K562 (cell line): ENCODE measurements at regions of chr1 and their contacts with region 1.

Region 1: DNA sequence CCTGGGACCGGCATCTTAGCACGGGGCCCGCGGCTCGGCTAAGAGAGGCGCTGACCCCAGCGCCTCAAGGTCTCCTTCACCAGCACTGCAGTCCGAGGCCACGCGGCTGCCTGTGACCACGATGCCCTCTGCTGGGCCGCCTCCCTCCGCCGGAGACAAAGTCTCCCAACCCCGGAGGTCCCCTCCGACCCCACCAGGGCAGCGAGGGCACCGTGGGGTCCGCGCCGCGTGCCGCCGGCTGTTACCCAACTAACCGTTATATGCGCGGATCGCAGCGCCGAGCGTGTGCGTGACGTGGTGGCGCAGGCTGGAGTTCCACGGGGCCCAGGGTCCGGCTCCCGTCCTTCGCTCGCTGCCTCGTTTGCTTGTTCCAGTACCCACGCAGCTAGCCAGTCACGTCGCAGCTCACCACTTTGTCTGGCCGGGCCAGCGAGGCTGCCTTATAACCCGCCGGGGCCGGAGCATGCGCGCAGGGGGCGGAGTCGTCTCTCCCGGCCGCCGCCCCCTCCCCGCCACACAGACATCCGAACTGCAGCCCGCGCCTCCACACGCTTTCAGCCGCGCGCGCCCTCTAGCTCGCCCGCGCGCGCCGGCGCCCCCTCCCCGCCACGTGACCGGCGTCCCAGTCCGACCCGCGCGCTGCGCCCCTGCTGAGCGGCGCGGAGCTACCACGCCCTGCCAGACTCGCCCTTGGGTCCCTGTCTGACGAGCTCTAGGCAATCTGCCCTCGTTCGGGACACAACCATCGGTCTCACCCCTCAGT is at the start of gene SLC16A1:
- DNase-seq: peak; percentile 97 to 98 (median 98)
- ATAC-seq: peak; percentile 84
- H3K4me3 ChIP-seq: peak within 1 kb of the TSS; percentile 74
- H3K27ac ChIP-seq: peak within 1 kb of the TSS; percentile 96
- H3K4me1 ChIP-seq: peaks cover 20 to 31% of the 10 kb centered on the region in 2 experiments
- H3K27me3 ChIP-seq: no peaks in the 10 kb centered on the region
- CTCF ChIP-seq: peak; percentile 42 to 59 (median 55); a peak in 5 of 6 replicates
- EP300 ChIP-seq: peak; percentile 53
- POLR2A ChIP-seq: peak; percentile 99
- RAD21 ChIP-seq: peak; percentile 71 to 77
- polyA plus RNA-seq, gene SLC16A1: 79.0 to 82.5 TPM

Region 2: GRCh38 chr1:112809253-112809684 is 146.7 kb before region 1 on chr1:
- CTCF ChIA-PET with region 1: no interaction called
- POLR2A ChIA-PET with region 1: interaction called, 3 read pairs
- in situ Hi-C with region 1: no loop called
- intact Hi-C with region 1: loop called (anchors 1 kb)
- DNase-seq: peak; percentile 78 to 88 (median 82)
- ATAC-seq: peak; percentile 97
- H3K4me3 ChIP-seq: no peak overlapping the region
- H3K27ac ChIP-seq: no peak overlapping the region
- H3K4me1 ChIP-seq: peaks cover 2 to 6% of the 10 kb centered on the region in 2 experiments; a peak in 3 of 5 replicates
- H3K27me3 ChIP-seq: peaks cover 19 to 20% of the 10 kb centered on the region in 2 experiments; a peak in 4 of 5 replicates
- CTCF ChIP-seq: peak; percentile 89 to 98 (median 95)
- EP300 ChIP-seq: no peak
- POLR2A ChIP-seq: no peak
- RAD21 ChIP-seq: peak; percentile 94 to 98

Region 3: DNA sequence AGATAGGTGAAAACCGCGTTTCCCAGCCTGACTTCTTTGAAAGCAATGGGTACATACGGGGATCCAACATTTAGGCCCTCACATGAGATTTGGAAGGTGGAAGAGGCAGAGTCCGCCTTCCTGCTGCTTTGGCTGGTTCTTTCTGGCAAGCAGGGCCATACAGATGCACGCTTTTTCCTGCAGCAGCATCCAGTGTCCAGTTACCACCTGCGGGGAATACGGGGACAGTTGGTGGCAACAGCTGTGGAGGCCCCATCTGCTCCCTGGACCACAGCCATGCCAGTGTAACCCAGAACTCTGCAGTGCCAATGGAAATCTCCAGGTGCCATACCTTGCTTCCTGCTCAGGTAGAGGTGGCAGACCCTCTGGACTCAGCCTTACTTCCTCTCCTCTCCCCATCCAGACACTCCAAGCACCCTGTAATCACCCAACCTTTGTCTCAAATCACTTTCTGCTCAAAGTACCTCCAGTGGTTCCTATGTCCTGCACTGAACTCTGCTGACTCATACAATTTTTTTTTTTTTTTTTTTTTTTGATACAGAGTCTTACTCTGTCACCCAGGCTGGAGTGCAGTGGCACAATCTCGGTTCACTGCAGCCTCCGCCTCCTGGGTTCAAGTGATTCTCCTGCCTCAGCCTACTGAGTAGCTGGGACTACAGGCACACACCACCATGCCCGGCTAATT is 68.2 kb before region 1 on chr1:
- CTCF ChIA-PET with region 1: interaction called, 3 read pairs
- POLR2A ChIA-PET with region 1: interaction called, 20 read pairs
- in situ Hi-C with region 1: no loop called
- intact Hi-C with region 1: no loop called
- DNase-seq: no peak
- ATAC-seq: peak; percentile 63
- H3K4me3 ChIP-seq: no peak overlapping the region
- H3K27ac ChIP-seq: no peak overlapping the region
- H3K4me1 ChIP-seq: peaks cover 26 to 27% of the 10 kb centered on the region in 2 experiments
- H3K27me3 ChIP-seq: no peaks in the 10 kb centered on the region
- CTCF ChIP-seq: no peak
- EP300 ChIP-seq: no peak
- POLR2A ChIP-seq: no peak
- RAD21 ChIP-seq: no peak

Region 4: GRCh38 chr1:112935461-112936289 is 20.3 kb before region 1 on chr1:
- CTCF ChIA-PET with region 1: no interaction called
- POLR2A ChIA-PET with region 1: interaction called, 190 read pairs
- in situ Hi-C with region 1: no loop called
- intact Hi-C with region 1: loop called (anchors 2 kb)
- DNase-seq: peak in 2 of 4 experiments; percentile 48 to 54
- ATAC-seq: peak; percentile 78
- H3K4me3 ChIP-seq: no peak overlapping the region
- H3K27ac ChIP-seq: peak overlapping the region; percentile 65
- H3K4me1 ChIP-seq: peaks cover 14 to 43% of the 10 kb centered on the region in 2 experiments
- H3K27me3 ChIP-seq: no peaks in the 10 kb centered on the region
- CTCF ChIP-seq: no peak
- EP300 ChIP-seq: peak; percentile 93
- POLR2A ChIP-seq: no peak
- RAD21 ChIP-seq: 0 out of 4 replicates have a peak, but pooled peaks of 1 of the 2 experiments have one; percentile 14

Region 5: GRCh38 chr1:113042285-113043143 is 86.6 kb after region 1 on chr1:
- CTCF ChIA-PET with region 1: no interaction called
- POLR2A ChIA-PET with region 1: interaction called, 6 read pairs
- in situ Hi-C with region 1: loop called (anchors 5 kb)
- intact Hi-C with region 1: loop called (anchors 1 kb)
- DNase-seq: peak; percentile 85 to 96 (median 90)
- ATAC-seq: peak; percentile 97
- H3K4me3 ChIP-seq: no peak overlapping the region
- H3K27ac ChIP-seq: peak overlapping the region; percentile 72
- H3K4me1 ChIP-seq: peaks cover 18 to 49% of the 10 kb centered on the region in 2 experiments
- H3K27me3 ChIP-seq: no peaks in the 10 kb centered on the region
- CTCF ChIP-seq: peak; percentile 90 to 98 (median 93)
- EP300 ChIP-seq: peak; percentile 73
- POLR2A ChIP-seq: no peak
- RAD21 ChIP-seq: peak; percentile 98

Region 6: DNA sequence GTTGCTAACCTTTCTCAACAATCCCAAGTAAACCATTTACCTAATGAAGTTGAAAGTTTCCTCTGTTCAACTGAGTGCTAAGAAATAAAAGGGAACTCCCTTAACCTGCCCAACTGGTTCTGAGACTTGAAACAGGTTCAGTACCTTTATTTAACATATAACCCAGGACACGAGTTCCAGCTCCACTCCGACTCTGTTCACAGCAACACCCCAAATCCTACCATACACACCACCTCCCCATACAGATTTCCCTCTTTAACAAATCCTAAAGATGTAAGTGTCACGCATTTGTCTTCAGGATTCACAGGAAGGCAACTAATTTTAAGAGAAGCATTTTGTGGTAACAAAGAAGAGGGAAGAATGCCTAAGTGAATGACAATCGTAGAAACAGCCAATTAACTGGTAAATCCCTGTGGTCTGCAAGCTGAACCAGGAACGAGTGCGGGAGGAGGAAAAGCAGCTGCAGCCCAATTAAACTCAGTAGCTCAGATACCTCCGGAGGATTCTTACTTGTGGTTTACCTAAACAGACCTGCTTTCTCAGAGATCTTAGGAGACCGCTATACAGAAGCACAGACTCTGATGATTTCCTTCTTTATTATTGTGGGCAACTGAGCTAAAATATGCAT is 299.9 kb after region 1 on chr1:
- CTCF ChIA-PET with region 1: no interaction called
- POLR2A ChIA-PET with region 1: no interaction called
- in situ Hi-C with region 1: no loop called
- intact Hi-C with region 1: no loop called
- DNase-seq: no peak
- ATAC-seq: no peak
- H3K4me3 ChIP-seq: no peak overlapping the region
- H3K27ac ChIP-seq: no peak overlapping the region
- H3K4me1 ChIP-seq: no peaks in the 10 kb centered on the region; a peak in 1 of 5 replicates
- H3K27me3 ChIP-seq: peaks cover 3 to 14% of the 10 kb centered on the region in 2 experiments; a peak in 2 of 5 replicates
- CTCF ChIP-seq: no peak
- EP300 ChIP-seq: no peak
- POLR2A ChIP-seq: no peak
- RAD21 ChIP-seq: no peak